Dorsolateral prefrontal cortex (tissue), 120 donors: ENCODE measurements at regions of chr2 and their contacts with region 1.

Region 1: GRCh38 chr2:233711312-233712008 is 1.2 kb upstream of the UGT1A5 start:
- DNase-seq: peak; percentile 50 to 79 (median 68)
- H3K4me3 ChIP-seq: no peak overlapping the region
- H3K27ac ChIP-seq: no peak overlapping the region
- H3K27me3 ChIP-seq: peaks cover 0 to 4% (median 0%) of the 10 kb centered on the region in 45 donors
- CTCF ChIP-seq: peak; percentile 40 to 85 (median 73)

Region 2: GRCh38 chr2:233404222-233404621 is 307.2 kb before region 1 on chr2:
- intact Hi-C with region 1: no loop called
- DNase-seq: no peak
- H3K4me3 ChIP-seq: no peak overlapping the region
- H3K27ac ChIP-seq: no peak overlapping the region
- H3K27me3 ChIP-seq: no peaks in the 10 kb centered on the region
- CTCF ChIP-seq: peak in 36 of 56 donors; percentile 15 to 47 (median 31)

Region 3: DNA sequence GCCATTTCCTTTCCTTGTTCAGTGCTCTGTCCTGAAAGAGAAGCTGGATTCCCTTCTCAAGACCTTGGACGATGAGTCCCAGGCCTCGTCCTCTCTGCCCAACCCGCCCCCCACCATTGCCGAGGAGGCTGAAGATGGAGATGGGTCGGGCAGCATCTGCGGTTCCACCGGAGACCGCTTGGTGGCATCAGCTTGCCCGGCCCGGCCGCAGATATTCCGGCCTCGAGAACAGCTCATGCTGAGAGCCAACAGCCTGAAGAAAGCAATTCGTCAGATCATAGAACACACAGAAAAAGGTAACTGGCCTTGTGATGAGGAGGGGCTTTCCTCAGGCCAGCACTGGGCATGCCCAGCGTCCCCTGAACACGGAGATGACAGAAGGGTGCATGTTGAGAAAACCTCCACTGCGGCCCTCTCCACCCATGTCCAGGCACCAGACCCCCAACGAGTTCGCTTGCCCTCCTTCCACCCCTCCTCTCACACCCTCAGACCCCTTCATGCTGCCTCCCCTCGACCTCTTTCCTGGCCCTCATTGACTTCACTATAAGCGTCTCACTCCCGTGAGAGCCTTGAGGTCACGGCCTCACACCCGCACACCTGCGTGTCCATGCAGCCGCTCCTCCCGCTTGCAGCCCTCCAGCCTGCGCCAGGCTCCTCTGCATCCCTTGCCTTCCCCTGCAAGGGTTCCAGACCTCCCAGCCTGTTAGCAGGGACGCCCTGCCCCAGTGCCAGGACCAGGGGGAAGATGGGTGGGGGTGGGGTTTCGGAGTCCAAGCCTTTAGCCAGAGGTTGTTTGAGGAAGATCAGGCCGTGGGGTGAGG is 262.2 kb before region 1 on chr2:
- intact Hi-C with region 1: loop called in 1 of 2 experiments (anchors 2 kb)
- DNase-seq: peak in 9 of 10 donors; percentile 59 to 81 (median 63)
- H3K4me3 ChIP-seq: no peak overlapping the region
- H3K27ac ChIP-seq: peak overlapping the region in 20 of 59 donors; percentile 1 to 56 (median 30)
- H3K27me3 ChIP-seq: no peaks in the 10 kb centered on the region
- CTCF ChIP-seq: peak; percentile 34 to 84 (median 75)

Region 4: GRCh38 chr2:233460726-233461441 is 250.6 kb before region 1 on chr2:
- intact Hi-C with region 1: no loop called
- DNase-seq: peak in 3 of 10 donors; percentile 26 to 91 (median 63)
- H3K4me3 ChIP-seq: peak overlapping the region in 3 of 59 donors; percentile 6 to 30 (median 9)
- H3K27ac ChIP-seq: peak overlapping the region in 46 of 59 donors; percentile 11 to 80 (median 55)
- H3K27me3 ChIP-seq: no peaks in the 10 kb centered on the region
- CTCF ChIP-seq: no peak

Region 5: GRCh38 chr2:233593201-233593600 is 118.3 kb before region 1 on chr2:
- intact Hi-C with region 1: no loop called
- DNase-seq: no peak
- H3K4me3 ChIP-seq: no peak overlapping the region
- H3K27ac ChIP-seq: no peak overlapping the region
- H3K27me3 ChIP-seq: peaks cover 0 to 2% (median 0%) of the 10 kb centered on the region in 45 donors
- CTCF ChIP-seq: no peak